Activated CD4-positive, alpha-beta memory T cell treated with anti-CD3 and anti-CD28 coated beads for 36 hours (primary cell): ENCODE measurements at regions of chr1 and their contacts with region 1.

Region 1: GRCh38 chr1:45569962-45570581 is 13.8 kb upstream of the NASP start:
- DNase-seq: peak; percentile 81
- H3K4me3 Mint-ChIP-seq: no peak overlapping the region
- H3K27ac Mint-ChIP-seq: peak overlapping the region; percentile 16
- H3K4me1 Mint-ChIP-seq: no peaks in the 10 kb centered on the region
- H3K27me3 Mint-ChIP-seq: no peaks in the 10 kb centered on the region

Region 2: GRCh38 chr1:45359882-45360513 is 210.1 kb before region 1 on chr1:
- CTCF ChIA-PET with region 1: interaction called, 20 read pairs
- POLR2A ChIA-PET with region 1: no interaction called
- intact Hi-C with region 1: loop called (anchors 2 kb)
- DNase-seq: peak; percentile 68
- H3K4me3 Mint-ChIP-seq: no peak overlapping the region
- H3K27ac Mint-ChIP-seq: no peak overlapping the region
- H3K4me1 Mint-ChIP-seq: peaks cover 9% of the 10 kb centered on the region
- H3K27me3 Mint-ChIP-seq: no peaks in the 10 kb centered on the region

Region 3: DNA sequence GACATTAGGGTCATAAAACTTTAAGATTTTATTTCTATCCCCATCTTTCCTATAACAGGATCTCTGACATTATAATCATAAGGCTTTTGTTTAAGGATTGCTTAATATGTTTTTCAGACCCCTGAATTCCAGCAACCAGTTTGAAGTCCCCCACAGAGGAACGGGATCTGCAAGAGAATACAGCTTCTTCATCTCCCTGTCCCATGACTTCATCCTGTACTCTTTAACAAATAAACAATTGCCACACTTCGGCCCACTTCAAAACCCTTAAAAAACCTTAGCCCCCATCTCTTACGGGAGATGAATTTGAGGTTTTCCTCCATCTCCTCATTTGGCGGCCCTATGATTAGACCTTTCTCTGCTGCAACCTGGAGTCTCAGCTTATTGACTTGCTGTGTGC is 114.9 kb before region 1 on chr1:
- CTCF ChIA-PET with region 1: no interaction called
- POLR2A ChIA-PET with region 1: no interaction called
- intact Hi-C with region 1: no loop called
- DNase-seq: no peak
- H3K4me3 Mint-ChIP-seq: no peak overlapping the region
- H3K27ac Mint-ChIP-seq: no peak overlapping the region
- H3K4me1 Mint-ChIP-seq: no peaks in the 10 kb centered on the region
- H3K27me3 Mint-ChIP-seq: no peaks in the 10 kb centered on the region

Region 4: DNA sequence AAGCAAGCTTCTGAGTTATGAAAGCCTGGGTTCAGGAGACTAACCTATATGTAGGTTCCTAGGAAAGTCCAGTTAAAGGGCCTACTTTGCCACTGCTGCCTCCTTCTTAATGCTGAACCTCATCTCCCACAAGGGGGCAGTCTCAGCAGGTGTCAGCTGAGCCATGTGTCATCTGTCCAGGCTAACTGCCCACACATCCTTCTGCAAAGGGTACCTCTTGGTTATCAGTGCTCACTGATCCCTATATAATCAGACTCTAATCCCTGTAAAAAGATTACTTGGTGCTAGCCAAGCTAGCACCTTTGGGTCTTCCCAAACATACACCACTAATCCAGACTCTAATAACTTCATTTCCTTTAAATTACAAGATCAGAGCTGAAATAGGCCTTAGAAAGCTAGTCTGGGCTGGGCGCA is 57.4 kb before region 1 on chr1:
- CTCF ChIA-PET with region 1: interaction called, 142 read pairs
- POLR2A ChIA-PET with region 1: interaction called, 5 read pairs
- intact Hi-C with region 1: loop called (anchors 1 kb)
- DNase-seq: peak; percentile 72
- H3K4me3 Mint-ChIP-seq: no peak overlapping the region
- H3K27ac Mint-ChIP-seq: peak overlapping the region; percentile 73
- H3K4me1 Mint-ChIP-seq: peaks cover 20% of the 10 kb centered on the region
- H3K27me3 Mint-ChIP-seq: no peaks in the 10 kb centered on the region

Region 5: GRCh38 chr1:45543581-45544417 is 26.3 kb before region 1 on chr1:
- CTCF ChIA-PET with region 1: interaction called, 18 read pairs
- POLR2A ChIA-PET with region 1: no interaction called
- intact Hi-C with region 1: no loop called
- DNase-seq: peak; percentile 87
- H3K4me3 Mint-ChIP-seq: peak overlapping the region; percentile 10
- H3K27ac Mint-ChIP-seq: peak overlapping the region; percentile 60
- H3K4me1 Mint-ChIP-seq: peaks cover 26% of the 10 kb centered on the region
- H3K27me3 Mint-ChIP-seq: no peaks in the 10 kb centered on the region

Region 6: DNA sequence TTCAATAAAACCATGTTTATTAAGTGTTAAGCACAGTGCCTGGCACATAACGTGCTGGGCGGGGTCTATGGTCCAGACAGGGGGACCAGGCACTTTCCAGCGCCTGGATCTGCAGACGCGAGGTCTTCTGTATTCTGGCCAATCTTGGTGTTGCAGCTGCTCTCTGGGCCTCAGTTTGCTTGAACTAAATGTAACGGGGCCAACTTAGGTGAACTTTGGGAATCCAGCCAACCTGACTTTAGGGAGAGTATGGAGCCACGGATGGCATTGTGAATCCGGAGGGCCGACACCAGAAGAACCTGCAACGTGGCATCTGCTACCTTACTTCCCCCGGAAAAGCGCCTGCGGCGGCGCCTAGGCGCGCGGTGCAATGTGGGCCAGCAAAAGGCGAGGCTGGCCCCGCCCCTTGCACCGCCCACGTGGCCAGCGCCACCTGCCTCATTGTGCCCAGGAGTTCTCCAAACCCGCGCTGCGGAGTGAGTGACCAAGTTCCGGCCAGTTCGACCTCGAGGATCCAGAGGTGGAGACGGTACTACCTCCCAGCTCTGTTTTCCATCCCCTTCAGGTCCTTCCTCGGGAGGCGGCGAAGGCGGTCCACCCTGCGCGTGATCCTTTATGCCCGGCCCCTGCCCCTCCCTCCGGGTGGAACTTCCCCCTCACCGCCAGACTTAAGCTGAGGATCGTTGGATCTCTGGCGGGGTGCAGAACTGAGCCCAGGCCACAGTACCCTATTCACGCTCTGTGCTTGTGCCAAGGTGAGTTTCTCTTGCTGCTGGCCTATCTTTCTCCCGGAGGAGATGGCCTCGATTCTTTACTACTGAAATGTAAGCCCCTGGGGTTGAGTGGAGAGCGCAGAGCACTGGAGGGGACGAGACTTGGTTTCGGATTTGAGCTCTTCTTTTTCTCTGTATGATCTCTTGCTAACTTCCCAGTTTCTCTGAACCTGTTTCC is 19.4 kb before region 1 on chr1 and contains the start of gene AKR1A1:
- CTCF ChIA-PET with region 1: interaction called, 22 read pairs
- POLR2A ChIA-PET with region 1: interaction called, 6 read pairs
- intact Hi-C with region 1: loop called (anchors 2 kb)
- DNase-seq: peak; percentile 92
- H3K4me3 Mint-ChIP-seq: peak within 1 kb of the TSS; percentile 94
- H3K27ac Mint-ChIP-seq: peak within 1 kb of the TSS; percentile 91
- H3K4me1 Mint-ChIP-seq: peaks cover 19% of the 10 kb centered on the region
- H3K27me3 Mint-ChIP-seq: no peaks in the 10 kb centered on the region
- total RNA-seq, gene AKR1A1: 184 TPM

Region 7: DNA sequence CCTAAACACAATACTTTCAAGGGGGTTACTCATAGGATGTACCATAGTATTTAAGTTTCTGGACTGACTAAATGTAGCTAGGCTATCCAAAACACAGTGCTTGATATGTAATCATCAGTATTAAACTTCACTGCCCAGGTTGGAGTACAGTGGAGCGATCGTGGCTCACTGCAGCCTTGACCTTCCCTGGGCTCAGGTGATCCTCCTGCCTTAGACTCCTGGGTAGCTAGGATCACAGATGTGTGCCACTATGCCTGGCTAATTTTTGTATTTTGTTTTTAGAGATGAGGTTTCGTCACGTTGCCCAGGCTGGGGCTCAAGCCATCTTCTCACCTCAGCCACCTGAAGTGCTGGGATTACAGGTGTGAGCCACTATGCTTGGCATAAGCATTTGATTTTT is 24.3 kb after region 1 on chr1:
- CTCF ChIA-PET with region 1: no interaction called
- POLR2A ChIA-PET with region 1: no interaction called
- intact Hi-C with region 1: no loop called
- DNase-seq: no peak
- H3K4me3 Mint-ChIP-seq: no peak overlapping the region
- H3K27ac Mint-ChIP-seq: no peak overlapping the region
- H3K4me1 Mint-ChIP-seq: peaks cover 23% of the 10 kb centered on the region
- H3K27me3 Mint-ChIP-seq: no peaks in the 10 kb centered on the region

Region 8: GRCh38 chr1:45785583-45785982 is 215.5 kb after region 1 on chr1:
- CTCF ChIA-PET with region 1: no interaction called
- POLR2A ChIA-PET with region 1: no interaction called
- intact Hi-C with region 1: no loop called
- DNase-seq: peak; percentile 53
- H3K4me3 Mint-ChIP-seq: peak overlapping the region; percentile 45
- H3K27ac Mint-ChIP-seq: no peak overlapping the region
- H3K4me1 Mint-ChIP-seq: peaks cover 15% of the 10 kb centered on the region
- H3K27me3 Mint-ChIP-seq: peaks cover 6% of the 10 kb centered on the region

Region 9: DNA sequence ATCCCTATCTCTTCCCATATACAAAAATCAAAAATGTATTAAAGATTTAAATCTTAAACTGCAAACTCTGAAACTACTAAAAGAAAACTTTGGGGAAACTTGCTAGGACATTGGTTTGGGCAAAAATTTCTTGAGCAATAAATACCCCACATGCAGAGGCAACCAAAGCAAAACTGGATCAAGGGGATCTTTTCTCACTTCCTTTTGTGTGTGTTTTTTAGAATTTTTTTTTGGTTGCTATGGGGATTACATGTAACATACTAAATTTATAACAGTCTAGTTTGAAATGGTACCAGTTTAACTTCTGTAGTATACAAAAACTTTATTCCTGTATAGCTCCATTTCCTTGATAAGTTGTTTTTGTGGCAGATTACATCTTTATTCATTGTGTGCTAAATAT is 250.1 kb after region 1 on chr1:
- CTCF ChIA-PET with region 1: no interaction called
- POLR2A ChIA-PET with region 1: no interaction called
- intact Hi-C with region 1: no loop called
- DNase-seq: no peak
- H3K4me3 Mint-ChIP-seq: no peak overlapping the region
- H3K27ac Mint-ChIP-seq: no peak overlapping the region
- H3K4me1 Mint-ChIP-seq: peaks cover 11% of the 10 kb centered on the region
- H3K27me3 Mint-ChIP-seq: no peaks in the 10 kb centered on the region